IMR-90 (cell line): ENCODE measurements at regions of chr3 and their contacts with region 1.

Region 1: DNA sequence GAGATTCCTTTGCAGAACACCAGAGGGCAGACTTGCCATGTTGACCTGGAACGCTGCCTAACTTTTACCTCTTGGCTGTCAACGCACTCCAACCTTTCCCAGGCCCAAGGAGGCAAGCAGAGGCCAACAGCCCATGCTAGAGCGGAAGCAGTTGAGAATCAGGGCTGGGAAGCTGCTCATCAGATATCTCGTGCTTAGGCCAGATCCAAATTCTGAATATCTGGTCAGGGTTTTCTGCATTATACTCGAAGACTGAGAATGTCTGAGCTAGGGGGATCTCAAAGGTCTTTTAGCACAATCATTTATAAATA is 2.5 kb downstream of the XIRP1 start:
- DNase-seq: peak; percentile 64
- ATAC-seq: peak; percentile 74; the same call in 1 of the 2 replicates
- H3K4me3 ChIP-seq: no peak overlapping the region
- H3K27ac ChIP-seq: no peak overlapping the region
- H3K4me1 ChIP-seq: peaks cover 9% of the 10 kb centered on the region
- H3K27me3 ChIP-seq: no peaks in the 10 kb centered on the region
- CTCF ChIP-seq: peak; percentile 81
- POLR2A ChIP-seq: no peak
- RAD21 ChIP-seq: peak; percentile 76

Region 2: DNA sequence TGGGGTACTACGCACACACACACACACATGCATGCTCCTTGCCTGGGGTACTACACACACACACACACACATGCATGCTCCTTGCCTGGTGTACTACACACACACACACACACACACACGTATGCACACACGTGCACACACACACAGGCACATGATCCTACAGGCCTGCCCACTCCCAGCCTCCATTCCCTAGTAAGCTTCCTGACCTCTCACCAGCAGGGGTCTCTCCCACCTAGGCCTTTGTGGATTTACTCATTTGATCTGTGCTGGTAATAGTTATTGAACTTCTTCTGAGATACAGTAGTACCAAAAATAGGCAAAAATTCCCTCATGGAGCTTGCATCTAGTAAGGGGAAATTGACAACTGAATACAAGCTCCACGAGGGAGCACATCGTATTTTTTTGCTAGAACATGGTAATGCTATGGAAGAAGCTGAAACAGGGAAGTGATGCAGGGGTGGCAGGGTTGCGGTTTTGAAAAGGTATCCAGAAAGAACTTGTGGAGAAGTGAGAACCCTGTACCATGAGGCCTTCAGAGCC is 63.3 kb before region 1 on chr3:
- CTCF ChIA-PET with region 1: interaction called, 3 read pairs
- POLR2A ChIA-PET with region 1: no interaction called
- dilution Hi-C with region 1: no loop called
- in situ Hi-C with region 1: no loop called
- intact Hi-C with region 1: loop called (anchors 2 kb)
- DNase-seq: peak; percentile 65
- ATAC-seq: peak; percentile 78
- H3K4me3 ChIP-seq: no peak overlapping the region
- H3K27ac ChIP-seq: no peak overlapping the region
- H3K4me1 ChIP-seq: peaks cover 5% of the 10 kb centered on the region
- H3K27me3 ChIP-seq: no peaks in the 10 kb centered on the region
- CTCF ChIP-seq: peak; percentile 65
- POLR2A ChIP-seq: no peak
- RAD21 ChIP-seq: peak; percentile 70

Region 3: GRCh38 chr3:39279745-39280517 is 90.0 kb after region 1 on chr3 and contains the start of gene CX3CR1:
- CTCF ChIA-PET with region 1: interaction called, 7 read pairs
- POLR2A ChIA-PET with region 1: no interaction called
- dilution Hi-C with region 1: no loop called
- in situ Hi-C with region 1: loop called (anchors 5 kb)
- intact Hi-C with region 1: no loop called
- DNase-seq: no peak
- ATAC-seq: no peak; the same call in 1 of the 2 replicates
- H3K4me3 ChIP-seq: no peak within 1 kb of the TSS
- H3K27ac ChIP-seq: no peak within 1 kb of the TSS
- H3K4me1 ChIP-seq: no peaks in the 10 kb centered on the region; the same call in 1 of the 2 replicates
- H3K27me3 ChIP-seq: peaks cover 10% of the 10 kb centered on the region
- CTCF ChIP-seq: no peak
- POLR2A ChIP-seq: no peak
- RAD21 ChIP-seq: no peak
- total RNA-seq, gene CX3CR1: not detected in 2 replicates